Astrocyte of the cerebellum (primary cell): ENCODE measurements at regions of chr5 and their contacts with region 1.

Region 1: DNA sequence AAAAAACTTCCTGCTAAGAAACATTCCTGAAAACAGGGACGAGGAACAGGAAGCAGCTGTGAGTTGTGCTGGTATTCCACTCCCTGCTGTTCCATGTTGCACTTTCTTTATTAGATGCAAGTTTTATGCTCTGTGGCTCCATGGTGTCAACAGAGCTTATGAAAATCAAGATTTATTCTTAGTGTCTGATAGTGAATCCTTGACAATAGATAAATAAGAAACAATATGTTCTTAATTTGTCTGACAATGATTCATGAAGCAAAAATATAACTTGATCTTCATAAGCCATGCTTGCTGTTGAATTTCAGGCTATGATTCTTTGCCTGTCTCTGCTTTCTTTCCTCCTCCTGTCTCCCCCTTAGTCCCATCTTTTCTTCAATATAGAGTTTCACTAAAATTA is 119.6 kb downstream of the DROSHA start:
- DNase-seq: no peak
- H3K4me3 ChIP-seq: no peak overlapping the region
- CTCF ChIP-seq: no peak

Region 2: DNA sequence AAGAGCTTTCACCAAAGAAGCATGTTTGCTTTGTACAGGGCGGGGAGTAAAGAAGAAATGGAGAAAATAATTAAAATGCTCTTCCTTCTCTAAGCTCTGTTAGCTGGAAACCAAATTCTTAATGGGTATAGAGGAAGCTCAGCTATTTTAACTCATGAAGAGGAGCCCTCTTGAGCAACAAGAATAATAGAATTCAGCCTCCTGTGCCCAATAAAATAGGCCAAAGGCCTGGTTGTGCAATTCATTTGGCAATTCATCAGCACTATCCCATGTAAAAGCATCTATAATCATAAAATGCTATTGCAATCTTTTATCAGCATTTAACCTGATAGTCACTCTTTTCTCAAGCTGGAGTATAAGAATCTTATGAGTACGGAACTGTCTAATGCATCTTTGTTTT is 352.4 kb before region 1 on chr5:
- in situ Hi-C with region 1: no loop called
- DNase-seq: no peak
- H3K4me3 ChIP-seq: no peak overlapping the region
- CTCF ChIP-seq: no peak

Region 3: DNA sequence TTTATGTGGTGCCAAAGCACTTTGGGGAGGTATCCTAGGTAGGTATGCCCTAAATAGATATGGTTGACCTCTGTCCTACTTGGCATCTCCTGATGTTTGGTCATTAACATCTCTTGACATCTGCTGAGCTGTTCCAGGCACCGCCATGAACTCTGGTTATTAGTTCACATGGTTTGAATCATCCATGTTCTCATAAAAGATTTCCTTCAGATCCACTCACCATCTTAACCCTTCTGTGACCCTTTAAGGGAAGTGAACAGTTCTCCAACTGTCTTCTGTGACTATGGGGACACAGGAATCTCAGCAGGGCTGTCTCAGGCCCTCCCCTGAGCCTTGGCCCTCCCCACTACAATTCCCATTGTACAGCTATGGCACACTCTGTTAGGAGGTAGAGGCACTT is 51.1 kb before region 1 on chr5:
- in situ Hi-C with region 1: loop called (anchors 5 kb)
- DNase-seq: no peak
- H3K4me3 ChIP-seq: no peak overlapping the region
- CTCF ChIP-seq: no peak